ENCODE measurements at regions of chr10 and their contacts with region 1.

Region 1: DNA sequence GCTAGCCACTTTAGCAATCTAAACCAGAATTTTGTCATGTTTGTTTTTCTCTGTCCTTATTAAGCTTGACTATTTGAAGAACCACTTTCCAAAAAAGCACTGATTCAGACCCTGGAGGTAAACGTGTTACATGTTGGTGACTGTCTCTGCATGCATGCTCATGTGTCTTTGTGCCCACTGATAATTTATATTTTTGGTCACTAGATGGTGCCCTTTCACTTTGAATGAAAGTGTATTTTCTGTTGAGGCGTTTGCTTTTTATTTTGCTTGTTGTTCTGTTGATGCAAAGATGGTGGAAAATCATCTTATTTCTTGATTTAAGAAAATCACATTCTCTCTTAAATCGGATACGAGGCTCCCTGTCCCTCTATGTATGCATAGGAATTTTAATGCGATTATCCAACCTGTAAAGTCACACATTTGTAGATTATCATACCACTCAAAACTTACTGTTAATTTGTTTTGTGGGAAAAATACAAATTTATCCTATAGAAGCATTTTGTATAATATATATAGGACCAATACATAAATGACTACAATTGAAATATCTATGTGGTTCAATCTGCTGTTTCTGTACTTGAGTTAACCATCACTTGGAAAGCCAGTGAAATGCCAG is 269.3 kb downstream of the BICC1 start:
- DNase-seq: peak; percentile 93
- ATAC-seq: peak; percentile 69
- H3K4me3 ChIP-seq: no peak overlapping the region
- H3K27ac ChIP-seq: no peak overlapping the region
- H3K4me1 ChIP-seq: peaks cover 20% of the 10 kb centered on the region
- H3K27me3 ChIP-seq: 0 out of 2 replicates have a peak, but pooled peaks cover 1% of the 10 kb centered on the region
- CTCF ChIP-seq: peak; percentile 97

Region 2: DNA sequence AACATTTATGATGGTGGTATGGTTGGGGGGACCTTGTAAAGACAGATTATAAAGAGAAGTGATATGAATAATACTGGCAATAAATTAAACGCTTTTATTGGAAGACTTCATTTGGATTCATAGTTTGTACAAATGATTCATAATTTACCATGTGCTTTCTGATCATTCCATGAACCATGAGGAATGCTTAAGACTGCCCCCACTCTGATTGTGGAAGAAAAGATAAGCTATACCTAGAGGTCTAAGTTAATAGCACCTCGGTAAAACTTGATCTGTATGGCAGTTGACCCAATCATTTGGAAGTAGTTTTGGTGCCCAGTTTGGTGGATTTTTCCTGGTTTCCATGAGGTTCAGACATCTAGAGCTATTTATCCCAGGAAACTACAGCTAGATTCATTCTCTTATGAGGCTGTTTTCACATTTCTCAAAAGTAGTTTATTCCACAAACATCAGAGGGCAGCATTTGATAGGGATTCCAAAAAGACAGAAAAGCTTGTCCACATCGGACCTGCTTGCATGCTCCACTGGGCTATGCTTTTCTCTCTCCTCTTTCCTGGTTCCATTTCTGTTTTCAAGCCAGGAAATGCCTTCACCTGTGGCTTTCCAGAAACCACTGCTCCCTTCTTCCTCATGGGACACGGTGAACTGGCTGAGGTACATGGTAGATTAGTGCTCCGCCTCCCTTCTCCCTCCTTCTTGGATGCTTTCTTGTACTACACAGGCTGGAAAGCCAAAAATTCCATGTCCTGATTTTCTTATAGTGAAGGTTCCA is 367.5 kb before region 1 on chr10:
- CTCF ChIA-PET with region 1: interaction called, 6 read pairs
- POLR2A ChIA-PET with region 1: interaction called, 3 read pairs
- intact Hi-C with region 1: loop called (anchors 2 kb)
- DNase-seq: peak; percentile 87
- ATAC-seq: peak; percentile 81
- H3K4me3 ChIP-seq: no peak overlapping the region
- H3K27ac ChIP-seq: no peak overlapping the region
- H3K4me1 ChIP-seq: peaks cover 22% of the 10 kb centered on the region
- H3K27me3 ChIP-seq: no peaks in the 10 kb centered on the region
- CTCF ChIP-seq: peak; percentile 87

Region 3: DNA sequence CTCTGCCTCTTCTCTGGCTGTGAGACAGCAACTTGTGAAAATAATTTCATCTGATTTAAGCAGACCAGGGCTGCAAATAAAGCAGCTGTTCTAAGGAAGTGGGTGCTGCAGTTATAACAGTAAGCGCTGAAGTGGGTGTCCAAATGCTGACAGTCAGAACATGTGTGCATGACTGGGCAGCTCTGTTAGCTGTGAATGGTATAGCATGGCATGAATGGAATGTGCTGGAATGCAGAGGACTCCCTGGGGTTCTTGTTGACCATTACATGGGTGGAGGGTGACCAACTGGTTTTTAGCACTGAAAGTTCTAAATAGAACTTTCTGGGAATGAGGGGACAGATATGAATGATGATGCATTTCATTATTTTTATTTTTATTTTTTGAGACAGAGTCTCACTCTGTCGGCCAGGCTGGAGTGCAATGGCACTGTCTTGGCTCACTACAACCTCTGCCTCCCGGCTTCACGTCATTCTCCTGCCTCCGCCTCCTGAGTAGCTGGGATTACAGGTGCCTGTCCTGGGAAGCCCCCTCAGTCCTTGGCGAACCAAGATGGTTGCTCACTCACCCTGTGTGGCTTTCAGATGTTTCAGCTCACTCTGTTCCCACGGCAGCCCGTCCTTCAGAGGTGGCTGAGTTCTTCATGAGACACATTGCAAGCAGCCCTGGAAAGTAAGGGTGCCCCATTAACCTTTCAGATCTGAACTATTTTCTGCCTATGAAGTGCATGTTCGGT is 74.7 kb after region 1 on chr10:
- CTCF ChIA-PET with region 1: no interaction called
- POLR2A ChIA-PET with region 1: no interaction called
- intact Hi-C with region 1: loop called (anchors 2 kb)
- DNase-seq: peak; percentile 97
- ATAC-seq: peak; percentile 100
- H3K4me3 ChIP-seq: no peak overlapping the region
- H3K27ac ChIP-seq: no peak overlapping the region
- H3K4me1 ChIP-seq: peaks cover 14% of the 10 kb centered on the region
- H3K27me3 ChIP-seq: no peaks in the 10 kb centered on the region
- CTCF ChIP-seq: no peak

Region 4: GRCh38 chr10:59181668-59182067 is 399.7 kb after region 1 on chr10:
- CTCF ChIA-PET with region 1: no interaction called
- POLR2A ChIA-PET with region 1: no interaction called
- intact Hi-C with region 1: loop called (anchors 1 kb)
- DNase-seq: peak; percentile 80
- ATAC-seq: peak; percentile 96
- H3K4me3 ChIP-seq: no peak overlapping the region
- H3K27ac ChIP-seq: no peak overlapping the region
- H3K4me1 ChIP-seq: no peaks in the 10 kb centered on the region
- H3K27me3 ChIP-seq: peaks cover 6% of the 10 kb centered on the region
- CTCF ChIP-seq: peak; percentile 89

Region 5: GRCh38 chr10:59580026-59580863 is 798.3 kb after region 1 on chr10:
- CTCF ChIA-PET with region 1: no interaction called
- POLR2A ChIA-PET with region 1: no interaction called
- intact Hi-C with region 1: loop called (anchors 5 kb)
- DNase-seq: peak; percentile 79
- ATAC-seq: peak; percentile 64
- H3K4me3 ChIP-seq: no peak overlapping the region
- H3K27ac ChIP-seq: no peak overlapping the region
- H3K4me1 ChIP-seq: peaks cover 21% of the 10 kb centered on the region
- H3K27me3 ChIP-seq: no peaks in the 10 kb centered on the region
- CTCF ChIP-seq: peak; percentile 94

Measured in PC-3 (cell line).